Activated naive CD4-positive, alpha-beta T cell treated with anti-CD3 and anti-CD28 coated beads for 36 hours (primary cell): ENCODE measurements at regions of chr7 and their contacts with region 1.

Region 1: DNA sequence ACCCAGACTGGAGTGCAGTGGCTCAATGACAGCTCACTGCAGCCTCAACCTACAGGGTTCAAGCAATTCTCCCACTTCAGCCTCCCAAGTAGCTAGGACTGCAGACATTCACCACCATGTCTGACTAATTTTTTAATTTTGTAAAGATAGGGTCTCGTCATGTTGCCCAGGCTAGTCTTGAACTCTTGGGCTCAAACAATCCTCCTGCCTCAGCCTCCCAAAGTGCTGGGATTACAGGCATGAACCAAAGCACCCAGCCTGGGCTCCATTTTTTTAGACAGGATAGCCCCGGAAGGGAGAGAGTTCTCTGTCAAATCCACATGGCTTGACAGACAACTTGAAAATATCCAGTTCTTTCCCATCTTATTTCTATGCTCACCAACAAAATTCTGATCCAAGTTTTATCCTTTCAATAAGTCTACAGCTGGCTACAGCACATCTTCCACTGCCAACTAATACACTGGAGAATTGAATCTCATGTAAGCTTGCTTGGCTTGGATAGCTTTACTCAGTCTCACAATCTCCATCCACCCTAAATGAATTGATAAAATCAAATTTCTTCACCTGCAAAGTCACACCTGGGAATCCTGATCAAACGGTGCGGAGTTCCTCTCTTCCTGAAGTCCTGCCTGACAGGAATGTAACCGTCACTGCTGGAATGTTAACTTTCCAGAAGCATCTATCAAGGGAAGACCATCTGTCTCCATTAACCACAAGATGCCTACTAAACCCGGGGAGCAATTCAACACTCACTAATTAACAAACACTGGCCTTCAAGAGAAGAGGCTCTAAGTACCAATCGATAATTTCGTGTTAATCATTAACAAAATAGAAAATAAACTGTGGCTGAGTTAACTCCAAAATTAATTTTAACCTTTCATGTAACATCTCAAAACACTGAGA is 239.7 kb upstream of the MKLN1 start:
- DNase-seq: no peak
- H3K4me3 Mint-ChIP-seq: no peak overlapping the region
- H3K27ac Mint-ChIP-seq: no peak overlapping the region
- H3K4me1 Mint-ChIP-seq: peaks cover 67% of the 10 kb centered on the region
- H3K27me3 Mint-ChIP-seq: no peaks in the 10 kb centered on the region

Region 2: GRCh38 chr7:131076032-131076431 is 12.0 kb before region 1 on chr7:
- CTCF ChIA-PET with region 1: interaction called, 3 read pairs
- intact Hi-C with region 1: loop called (anchors 1 kb)
- DNase-seq: no peak
- H3K4me3 Mint-ChIP-seq: no peak overlapping the region
- H3K27ac Mint-ChIP-seq: peak overlapping the region; percentile 14
- H3K4me1 Mint-ChIP-seq: peaks cover 47% of the 10 kb centered on the region
- H3K27me3 Mint-ChIP-seq: no peaks in the 10 kb centered on the region

Region 3: DNA sequence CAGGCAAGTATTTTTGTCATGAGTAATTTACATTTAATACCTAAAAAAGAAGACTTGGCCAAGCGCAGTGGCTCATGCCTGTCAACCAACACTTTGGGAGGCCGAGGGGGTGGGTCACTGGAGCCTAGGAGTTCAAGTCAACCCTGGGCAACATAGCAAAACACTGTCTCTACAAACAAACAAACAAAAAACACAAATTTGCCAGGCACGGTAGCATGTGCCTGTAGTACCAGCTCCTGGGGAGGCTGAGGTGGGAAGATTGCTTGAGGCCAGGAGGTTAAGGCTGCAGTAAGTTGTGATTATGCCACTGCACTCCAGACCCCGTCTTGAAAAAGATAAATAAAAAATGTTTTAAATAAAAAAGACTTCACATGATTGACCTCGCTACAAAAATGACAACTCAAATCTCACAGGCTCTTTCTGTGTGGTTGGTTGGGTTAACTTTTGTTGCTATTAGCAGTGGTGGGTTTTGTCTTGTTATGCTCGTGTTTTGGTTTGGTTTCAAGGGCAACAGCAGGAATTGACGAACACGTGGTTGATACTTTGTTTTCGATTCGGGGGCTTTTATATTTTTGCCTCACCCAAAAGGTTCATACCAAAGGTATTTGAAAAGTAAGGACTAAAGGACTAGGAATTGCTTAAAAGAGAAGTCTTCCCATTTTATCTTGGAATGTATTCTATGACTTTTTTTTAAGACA is 12.5 kb after region 1 on chr7:
- CTCF ChIA-PET with region 1: interaction called, 9 read pairs
- intact Hi-C with region 1: loop called (anchors 1 kb)
- DNase-seq: no peak
- H3K4me3 Mint-ChIP-seq: peak overlapping the region; percentile 28
- H3K27ac Mint-ChIP-seq: peak overlapping the region; percentile 48
- H3K4me1 Mint-ChIP-seq: peaks cover 83% of the 10 kb centered on the region
- H3K27me3 Mint-ChIP-seq: no peaks in the 10 kb centered on the region

Region 4: GRCh38 chr7:131279044-131279443 is 191.0 kb after region 1 on chr7:
- CTCF ChIA-PET with region 1: no interaction called
- intact Hi-C with region 1: no loop called
- DNase-seq: no peak
- H3K4me3 Mint-ChIP-seq: no peak overlapping the region
- H3K27ac Mint-ChIP-seq: no peak overlapping the region
- H3K4me1 Mint-ChIP-seq: no peaks in the 10 kb centered on the region
- H3K27me3 Mint-ChIP-seq: no peaks in the 10 kb centered on the region